ENCODE measurements at regions of chrX and their contacts with region 1.

Region 1: DNA sequence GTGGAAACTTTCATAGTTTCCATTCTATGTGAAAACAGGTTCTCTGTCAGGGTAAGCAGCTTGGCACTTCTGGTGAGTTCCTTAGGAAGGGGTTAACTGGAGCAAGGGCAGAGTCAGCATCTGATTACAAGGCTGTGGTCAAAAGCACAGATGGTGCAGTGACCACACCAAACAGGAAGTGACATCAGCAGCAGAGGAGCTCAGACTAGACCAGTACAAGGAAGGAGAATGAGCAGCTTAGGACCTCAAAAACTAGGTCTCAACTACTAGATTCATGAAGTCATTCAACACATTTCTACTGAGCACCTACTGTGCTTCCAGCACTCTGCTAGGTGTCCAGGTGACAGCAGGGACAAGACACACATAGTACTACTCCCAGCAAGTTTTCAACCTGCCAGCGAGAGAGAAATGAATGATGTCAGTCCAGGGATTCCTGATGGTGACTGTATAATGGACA is 130.2 kb downstream of the AMELX start:
- DNase-seq: peak; percentile 34 to 89 (median 56)
- ATAC-seq: peak; percentile 64
- H3K4me3 ChIP-seq: peak overlapping the region; percentile 11; the same call in 1 of the 2 replicates
- H3K27ac ChIP-seq: peak overlapping the region; percentile 92
- H3K4me1 ChIP-seq: peaks cover 13 to 62% of the 10 kb centered on the region in 2 experiments
- H3K27me3 ChIP-seq: no peaks in the 10 kb centered on the region
- CTCF ChIP-seq: no peak
- EP300 ChIP-seq: peak; percentile 74
- POLR2A ChIP-seq: peak; percentile 73
- RAD21 ChIP-seq: no peak

Region 2: GRCh38 chrX:11407331-11408108 is 15.9 kb before region 1 on chrX:
- CTCF ChIA-PET with region 1: no interaction called
- POLR2A ChIA-PET with region 1: interaction called, 10 read pairs
- in situ Hi-C with region 1: no loop called
- intact Hi-C with region 1: loop called (anchors 2 kb)
- DNase-seq: peak in 1 of 4 experiments; percentile 72
- ATAC-seq: peak; percentile 41
- H3K4me3 ChIP-seq: no peak overlapping the region
- H3K27ac ChIP-seq: peak overlapping the region; percentile 87
- H3K4me1 ChIP-seq: peaks cover 15 to 87% of the 10 kb centered on the region in 2 experiments
- H3K27me3 ChIP-seq: no peaks in the 10 kb centered on the region
- CTCF ChIP-seq: no peak
- EP300 ChIP-seq: peak; percentile 54
- POLR2A ChIP-seq: no peak
- RAD21 ChIP-seq: no peak

Region 3: DNA sequence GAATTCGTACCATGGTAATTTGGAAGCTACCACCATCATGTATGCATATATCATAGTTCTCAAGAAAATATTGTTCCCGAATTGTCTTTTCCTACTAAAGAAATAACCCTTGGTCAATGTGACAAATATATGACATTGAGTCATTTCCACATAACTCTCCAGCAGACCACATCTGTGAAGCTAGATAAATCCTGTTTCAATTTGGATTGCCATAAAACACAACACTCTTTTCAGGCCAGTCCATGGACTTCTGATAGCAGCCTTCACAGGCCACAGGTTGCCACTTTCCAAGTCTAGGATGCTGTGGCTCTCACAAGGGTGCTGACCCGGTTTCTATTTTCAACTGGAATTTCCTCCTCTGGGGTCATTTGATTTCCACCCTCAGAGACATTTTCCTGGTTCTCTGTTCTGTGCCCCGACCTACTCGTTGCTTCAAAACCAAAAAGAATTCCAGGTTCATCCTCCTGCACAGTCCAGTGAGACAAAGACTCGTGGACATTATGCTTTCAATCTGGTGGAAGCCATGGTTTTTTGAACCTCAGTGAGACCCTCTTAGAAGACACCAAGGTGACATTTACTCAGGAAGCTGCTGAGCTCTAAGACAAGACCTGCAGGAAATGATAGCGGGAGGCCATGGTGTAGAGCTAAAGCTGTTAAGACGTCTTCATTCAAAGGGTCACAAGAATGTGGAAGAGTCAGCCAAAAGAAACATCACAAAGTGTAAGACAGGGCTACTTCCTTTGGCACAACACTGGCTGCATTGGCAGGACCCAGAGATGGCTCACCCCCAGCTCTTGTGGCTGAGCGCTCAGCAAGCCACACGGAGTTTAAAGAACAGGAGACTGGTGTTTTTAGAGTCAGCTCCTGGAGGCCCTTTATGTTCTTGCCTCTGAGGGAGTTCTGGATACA is 10.4 kb before region 1 on chrX:
- CTCF ChIA-PET with region 1: no interaction called
- POLR2A ChIA-PET with region 1: interaction called, 10 read pairs
- in situ Hi-C with region 1: no loop called
- intact Hi-C with region 1: loop called (anchors 2 kb)
- DNase-seq: peak in 2 of 4 experiments; percentile 35 to 73
- ATAC-seq: peak; percentile 74
- H3K4me3 ChIP-seq: no peak overlapping the region
- H3K27ac ChIP-seq: peak overlapping the region; percentile 87
- H3K4me1 ChIP-seq: peaks cover 11 to 74% of the 10 kb centered on the region in 2 experiments
- H3K27me3 ChIP-seq: no peaks in the 10 kb centered on the region
- CTCF ChIP-seq: no peak
- EP300 ChIP-seq: peak; percentile 65; the same call in 1 of the 2 replicates
- POLR2A ChIP-seq: no peak
- RAD21 ChIP-seq: no peak